OCI-LY7 (cell line): ENCODE measurements at regions of chr7 and their contacts with region 1.

Region 1: DNA sequence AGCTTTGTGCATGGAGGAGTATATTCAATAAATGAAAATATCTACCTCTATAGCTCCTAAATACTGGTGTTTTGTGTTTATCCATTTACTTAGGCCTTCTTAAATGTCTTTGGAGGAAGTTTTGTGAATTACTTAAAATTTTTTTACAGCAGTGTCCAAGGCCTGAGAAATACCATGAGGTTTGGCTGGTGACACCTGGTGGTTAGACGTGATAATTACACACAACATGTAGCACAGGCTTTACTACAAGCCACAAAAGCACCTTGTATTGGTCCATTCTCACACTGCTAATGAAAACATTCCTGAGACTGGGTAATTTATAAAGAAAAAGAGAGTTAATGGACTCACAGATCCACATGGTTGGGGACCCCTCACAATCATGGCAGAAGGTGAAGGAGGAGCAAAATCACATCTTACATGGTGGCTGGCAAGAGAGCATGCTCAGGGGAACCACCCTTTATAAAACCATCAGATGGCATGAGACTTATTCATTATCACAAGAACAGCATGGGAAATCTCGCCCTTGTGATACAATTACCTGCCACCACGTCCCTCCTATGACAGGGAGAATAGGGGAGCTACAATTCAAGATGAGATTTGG is 20.6 kb downstream of the HYAL4 start:
- DNase-seq: peak; percentile 60
- H3K4me3 ChIP-seq: no peak overlapping the region
- H3K27ac ChIP-seq: no peak overlapping the region
- H3K4me1 ChIP-seq: no peaks in the 10 kb centered on the region
- CTCF ChIP-seq: peak; percentile 82

Region 2: DNA sequence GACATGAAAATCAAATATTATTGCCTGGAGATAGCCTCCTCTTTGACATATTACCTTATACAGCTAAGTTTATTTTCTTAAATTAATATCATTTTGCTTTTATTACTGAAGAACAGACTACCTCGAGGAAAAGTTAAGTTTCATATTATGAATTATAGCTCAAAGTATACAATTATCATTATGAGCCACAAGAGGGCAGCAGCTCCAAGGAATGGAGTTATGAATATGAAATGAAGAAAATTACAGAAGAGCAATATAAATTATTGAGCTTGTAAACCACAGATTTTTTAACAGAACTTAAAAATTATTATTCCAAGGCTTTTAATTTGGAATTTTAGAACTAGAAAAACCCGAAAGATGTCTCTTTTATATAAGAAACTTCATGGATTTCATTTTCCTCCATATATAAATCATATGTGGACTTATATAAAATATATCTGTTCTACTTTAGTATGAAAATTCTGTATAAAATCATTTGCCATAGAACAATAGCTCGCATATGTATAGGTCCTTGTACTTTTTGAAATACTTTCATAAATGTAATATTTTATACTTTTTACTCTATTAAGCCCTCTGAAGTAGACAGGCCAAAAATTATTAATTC is 371.3 kb before region 1 on chr7:
- CTCF ChIA-PET with region 1: no interaction called
- POLR2A ChIA-PET with region 1: no interaction called
- intact Hi-C with region 1: loop called (anchors 10 kb)
- DNase-seq: peak; percentile 50
- H3K4me3 ChIP-seq: no peak overlapping the region
- H3K27ac ChIP-seq: no peak overlapping the region
- H3K4me1 ChIP-seq: no peaks in the 10 kb centered on the region
- CTCF ChIP-seq: peak; percentile 92

Region 3: DNA sequence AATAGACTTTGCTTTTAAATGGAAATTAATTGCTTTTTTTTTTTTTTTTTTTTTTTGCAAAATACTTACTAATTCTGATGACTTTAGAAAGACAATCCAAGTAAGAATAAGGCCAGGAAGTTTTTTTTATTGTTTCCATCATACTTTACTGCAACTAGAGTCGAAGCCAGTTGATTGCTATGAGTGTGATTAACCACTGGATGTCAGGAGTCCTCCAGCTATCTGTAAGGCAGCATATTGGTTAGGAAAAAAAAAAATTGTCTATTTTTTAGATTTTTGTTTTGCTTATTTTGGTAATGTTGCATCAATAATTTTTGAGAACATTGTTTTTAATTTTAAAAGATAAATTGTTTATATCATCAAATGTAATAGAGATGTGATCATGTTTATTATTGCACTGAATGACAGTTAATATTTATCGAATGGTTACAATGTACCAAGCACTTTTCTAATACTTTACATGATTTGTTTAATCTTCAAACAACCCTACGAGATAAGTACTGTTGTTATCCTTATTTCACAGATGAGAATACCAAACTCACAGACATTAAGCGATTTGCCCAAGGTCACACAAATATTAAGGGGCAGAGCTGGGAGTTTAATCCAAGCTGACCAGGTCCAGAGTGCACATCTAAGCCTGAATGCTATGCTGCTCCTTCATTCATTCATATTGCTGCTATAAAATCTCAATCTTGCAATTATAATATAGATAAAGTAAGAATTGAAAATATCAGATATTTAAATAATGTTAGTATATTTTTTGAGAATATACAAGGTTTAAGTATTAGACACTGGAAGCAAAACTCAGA is 229.9 kb before region 1 on chr7:
- CTCF ChIA-PET with region 1: no interaction called
- POLR2A ChIA-PET with region 1: interaction called, 4 read pairs
- intact Hi-C with region 1: loop called (anchors 2 kb)
- DNase-seq: peak; percentile 17
- H3K4me3 ChIP-seq: no peak overlapping the region
- H3K27ac ChIP-seq: no peak overlapping the region
- H3K4me1 ChIP-seq: no peaks in the 10 kb centered on the region
- CTCF ChIP-seq: peak; percentile 75

Region 4: DNA sequence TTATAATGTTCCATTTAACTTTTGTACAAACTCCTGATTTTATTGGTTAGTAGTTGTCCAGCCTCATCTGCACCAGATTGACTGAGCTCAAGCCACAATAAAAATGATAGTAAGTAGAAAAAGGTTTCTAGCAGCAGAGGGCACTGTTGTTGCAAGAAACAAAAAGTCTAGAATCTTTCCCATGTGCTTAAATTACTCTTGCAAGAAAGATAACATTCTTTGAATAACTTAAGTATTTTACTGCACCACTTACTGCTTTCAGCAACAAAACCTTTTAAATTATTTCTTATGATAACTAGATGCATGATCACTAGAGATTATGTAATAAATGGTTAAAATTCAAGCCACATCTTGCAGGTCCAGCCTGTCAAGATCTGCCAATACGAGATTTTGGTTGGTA is 182.9 kb before region 1 on chr7:
- CTCF ChIA-PET with region 1: no interaction called
- POLR2A ChIA-PET with region 1: no interaction called
- intact Hi-C with region 1: loop called (anchors 1 kb)
- DNase-seq: peak; percentile 60
- H3K4me3 ChIP-seq: no peak overlapping the region
- H3K27ac ChIP-seq: no peak overlapping the region
- H3K4me1 ChIP-seq: no peaks in the 10 kb centered on the region
- CTCF ChIP-seq: peak; percentile 85

Region 5: DNA sequence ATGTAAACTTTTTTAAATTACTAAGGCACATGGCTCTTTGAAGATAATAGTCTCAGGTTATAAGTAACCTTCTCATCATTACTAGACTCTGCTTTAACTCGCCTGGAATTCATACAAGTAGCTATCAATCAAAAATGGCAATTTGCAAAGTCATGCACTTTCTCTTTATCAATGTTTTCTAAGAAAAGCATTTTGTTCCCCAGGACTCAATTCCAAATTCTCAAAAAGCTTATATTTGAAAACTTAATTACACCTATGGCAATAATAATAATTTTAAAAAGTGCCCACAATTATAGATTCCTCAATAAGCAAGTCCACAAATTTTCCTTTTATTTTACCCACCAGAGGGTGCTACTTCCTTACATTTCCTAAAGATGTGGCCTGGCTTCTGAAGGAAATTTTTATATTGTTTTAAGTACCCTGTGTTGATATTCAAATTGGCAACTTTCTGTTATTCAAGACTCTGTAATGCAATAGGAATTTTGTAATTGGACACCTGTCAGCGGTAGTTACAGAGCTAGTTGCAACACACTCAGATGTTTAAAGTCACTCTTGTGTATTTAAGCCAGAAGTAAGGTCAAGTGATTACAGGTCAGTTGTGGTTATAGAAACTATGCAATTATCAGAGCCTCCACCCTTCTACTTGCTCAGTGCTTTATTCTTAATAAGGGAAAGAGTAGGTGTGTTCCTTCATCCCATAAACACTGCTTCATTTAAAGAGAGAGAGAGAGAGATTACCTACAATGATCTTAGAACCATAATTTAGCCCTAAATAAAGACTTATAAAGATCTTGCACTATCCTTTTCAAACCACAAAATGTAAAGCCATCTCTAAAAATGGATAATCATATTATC is 67.7 kb before region 1 on chr7:
- CTCF ChIA-PET with region 1: no interaction called
- POLR2A ChIA-PET with region 1: no interaction called
- intact Hi-C with region 1: loop called (anchors 5 kb)
- DNase-seq: peak; percentile 17
- H3K4me3 ChIP-seq: no peak overlapping the region
- H3K27ac ChIP-seq: no peak overlapping the region
- H3K4me1 ChIP-seq: no peaks in the 10 kb centered on the region
- CTCF ChIP-seq: peak; percentile 74

Region 6: GRCh38 chr7:123929107-123929506 is 63.5 kb after region 1 on chr7:
- CTCF ChIA-PET with region 1: no interaction called
- POLR2A ChIA-PET with region 1: no interaction called
- intact Hi-C with region 1: no loop called
- DNase-seq: no peak
- H3K4me3 ChIP-seq: no peak overlapping the region
- H3K27ac ChIP-seq: no peak overlapping the region
- H3K4me1 ChIP-seq: no peaks in the 10 kb centered on the region
- CTCF ChIP-seq: no peak

Region 7: GRCh38 chr7:124489789-124490324 is 624.2 kb after region 1 on chr7:
- CTCF ChIA-PET with region 1: no interaction called
- POLR2A ChIA-PET with region 1: no interaction called
- intact Hi-C with region 1: no loop called
- DNase-seq: no peak
- H3K4me3 ChIP-seq: no peak overlapping the region
- H3K27ac ChIP-seq: no peak overlapping the region
- H3K4me1 ChIP-seq: no peaks in the 10 kb centered on the region
- CTCF ChIP-seq: no peak

Region 8: GRCh38 chr7:124566576-124566975 is 701.0 kb after region 1 on chr7:
- CTCF ChIA-PET with region 1: no interaction called
- POLR2A ChIA-PET with region 1: no interaction called
- intact Hi-C with region 1: no loop called
- DNase-seq: no peak
- H3K4me3 ChIP-seq: no peak overlapping the region
- H3K27ac ChIP-seq: no peak overlapping the region
- H3K4me1 ChIP-seq: no peaks in the 10 kb centered on the region
- CTCF ChIP-seq: no peak